ENCODE measurements at regions of chrX and their contacts with region 1.

Region 1: GRCh38 chrX:68828740-68829552 is at the start of gene EFNB1:
- DNase-seq: peak; percentile 94 to 95
- ATAC-seq: peak; percentile 93
- H3K4me3 ChIP-seq: peak within 1 kb of the TSS; percentile 56 to 63
- H3K27ac ChIP-seq: peak within 1 kb of the TSS in 1 of 2 donors; percentile 24
- H3K4me1 ChIP-seq: no peaks in the 10 kb centered on the region
- H3K27me3 ChIP-seq: no peaks in the 10 kb centered on the region
- total RNA-seq, gene EFNB1: 17.0 to 24.0 TPM

Region 2: DNA sequence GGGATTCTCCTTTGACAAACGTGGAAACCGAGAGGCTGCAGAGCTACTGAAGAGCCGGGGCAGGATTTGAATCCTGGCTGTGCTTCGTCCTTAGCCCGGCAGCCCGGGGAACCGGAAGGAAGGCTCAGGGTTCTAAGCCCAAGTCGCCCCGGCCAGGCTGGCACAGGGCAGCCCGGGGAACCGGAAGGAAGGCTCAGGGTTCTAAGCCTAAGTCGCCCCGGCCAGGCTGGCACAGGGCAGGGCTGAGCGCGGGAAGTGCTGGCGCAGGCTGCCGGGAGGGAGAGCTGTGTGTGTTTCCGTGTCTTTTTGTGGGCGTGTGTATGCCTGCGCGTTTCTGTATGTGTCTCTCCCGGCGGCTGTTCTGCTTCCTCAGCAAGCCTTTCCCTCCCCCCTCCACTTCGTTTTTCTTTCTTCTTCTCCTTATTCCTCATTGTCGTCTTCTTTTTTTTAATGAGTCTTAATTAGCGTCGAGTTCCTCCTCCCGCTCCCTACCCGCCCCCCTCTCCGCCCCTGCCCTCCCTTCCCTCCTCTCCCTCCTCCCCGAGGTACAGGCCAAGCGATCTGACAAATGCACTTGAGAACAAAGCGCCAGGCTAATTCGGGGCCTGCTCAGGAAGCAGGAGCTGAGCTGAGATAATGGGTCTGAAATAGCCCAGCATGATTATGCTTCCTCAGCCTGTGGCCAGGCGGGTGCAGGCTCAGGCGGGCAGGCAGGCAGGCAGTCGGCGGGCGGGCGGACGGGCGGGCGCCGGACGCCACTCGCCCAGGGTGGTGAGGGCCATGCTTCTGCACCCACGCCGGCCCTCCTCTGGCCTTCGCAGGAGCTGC is 65.8 kb after region 1 on chrX:
- intact Hi-C with region 1: loop called in 1 of 2 experiments (anchors 5 kb)
- DNase-seq: peak; percentile 83 to 88
- ATAC-seq: peak; percentile 72
- H3K4me3 ChIP-seq: no peak overlapping the region
- H3K27ac ChIP-seq: peak overlapping the region in 1 of 2 donors; percentile 97
- H3K4me1 ChIP-seq: no peaks in the 10 kb centered on the region
- H3K27me3 ChIP-seq: no peaks in the 10 kb centered on the region

Region 3: GRCh38 chrX:68989865-68990606 is 161.1 kb after region 1 on chrX:
- intact Hi-C with region 1: loop called in 1 of 2 experiments (anchors 10 kb)
- DNase-seq: peak; percentile 68 to 82
- ATAC-seq: peak; percentile 58
- H3K4me3 ChIP-seq: no peak overlapping the region
- H3K27ac ChIP-seq: peak overlapping the region in 1 of 2 donors; percentile 32
- H3K4me1 ChIP-seq: no peaks in the 10 kb centered on the region
- H3K27me3 ChIP-seq: no peaks in the 10 kb centered on the region

Region 4: GRCh38 chrX:69165087-69165651 is 336.2 kb after region 1 on chrX and contains the start of gene PJA1:
- intact Hi-C with region 1: loop called (anchors 2 to 5 kb)
- DNase-seq: peak; percentile 82 to 90
- ATAC-seq: peak; percentile 92
- H3K4me3 ChIP-seq: peak within 1 kb of the TSS; percentile 34 to 70
- H3K27ac ChIP-seq: peak within 1 kb of the TSS in 1 of 2 donors; percentile 72
- H3K4me1 ChIP-seq: no peaks in the 10 kb centered on the region
- H3K27me3 ChIP-seq: no peaks in the 10 kb centered on the region
- total RNA-seq, gene PJA1: 26.1 to 28.1 TPM

Region 5: DNA sequence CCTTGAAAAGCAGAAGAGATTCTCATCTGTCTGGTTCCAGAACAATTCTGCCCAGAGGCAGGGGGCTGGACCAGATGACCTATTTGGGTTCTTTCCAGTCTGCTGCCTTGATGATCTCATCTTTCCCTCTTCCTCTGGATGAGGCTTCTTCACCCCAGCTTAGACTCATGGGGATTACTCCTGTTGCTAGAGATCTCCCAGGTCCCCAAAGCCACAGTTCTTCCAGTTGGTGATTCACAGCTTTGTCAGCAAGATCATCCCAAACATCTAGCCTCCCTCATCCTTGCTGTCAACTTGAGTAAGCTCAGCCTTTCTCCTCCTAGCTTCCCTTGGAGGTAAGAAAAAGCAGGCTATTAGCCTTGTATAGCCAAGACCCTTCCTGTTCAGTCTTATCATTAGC is 400.5 kb after region 1 on chrX:
- intact Hi-C with region 1: no loop called
- DNase-seq: no peak
- ATAC-seq: no peak
- H3K4me3 ChIP-seq: no peak overlapping the region
- H3K27ac ChIP-seq: no peak overlapping the region
- H3K4me1 ChIP-seq: no peaks in the 10 kb centered on the region
- H3K27me3 ChIP-seq: no peaks in the 10 kb centered on the region

Region 6: GRCh38 chrX:69293776-69294601 is 465.0 kb after region 1 on chrX:
- intact Hi-C with region 1: loop called in 1 of 2 experiments (anchors 2 kb)
- DNase-seq: no peak
- ATAC-seq: no peak
- H3K4me3 ChIP-seq: no peak overlapping the region
- H3K27ac ChIP-seq: no peak overlapping the region
- H3K4me1 ChIP-seq: no peaks in the 10 kb centered on the region
- H3K27me3 ChIP-seq: no peaks in the 10 kb centered on the region

Measured in aorta (tissue), 5 donors.